Heart right ventricle (tissue), 16 donors: ENCODE measurements at regions of chr2 and their contacts with region 1.

Region 1: DNA sequence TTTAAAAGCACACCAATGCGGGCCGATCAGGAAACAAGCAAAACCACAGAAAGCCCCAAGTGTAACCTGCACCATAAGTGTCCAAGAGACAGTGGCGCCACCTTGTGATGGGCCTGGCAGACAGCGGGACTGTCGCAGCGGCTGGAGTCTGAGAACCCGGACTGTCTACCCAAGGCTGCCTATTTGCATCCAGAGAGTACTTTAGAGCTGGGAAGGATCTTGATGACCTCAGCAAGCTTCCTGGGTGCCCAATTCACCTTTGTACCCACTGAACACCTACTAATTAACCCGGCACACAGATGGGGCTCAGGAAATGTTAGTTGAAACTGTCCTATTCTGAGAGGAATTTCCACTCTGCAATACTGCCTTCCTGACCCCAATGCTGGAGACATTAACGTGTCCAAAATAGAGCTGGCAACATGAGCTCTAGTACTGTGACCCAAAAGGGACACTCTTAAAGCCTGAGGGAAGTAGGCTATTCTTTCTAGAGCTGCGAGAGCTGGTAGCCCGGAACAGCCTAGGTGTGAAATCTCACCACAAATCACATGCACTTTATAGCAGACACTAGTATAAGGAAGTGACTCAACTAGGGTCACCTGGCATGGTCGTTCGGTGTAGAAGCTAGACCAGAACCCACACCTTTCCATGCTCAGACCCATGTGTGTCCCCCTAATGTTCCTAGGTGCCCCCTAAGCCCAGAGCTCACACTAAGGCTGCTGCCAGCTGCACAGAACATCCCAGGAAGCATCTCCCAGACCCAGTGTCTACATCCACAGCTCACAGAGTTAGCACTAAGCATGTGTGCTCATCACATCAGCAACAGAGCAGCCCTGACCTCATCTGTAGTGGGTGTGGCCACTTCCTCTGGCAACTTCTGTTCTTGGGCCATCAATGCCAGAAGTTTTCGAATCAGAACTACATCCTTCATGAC is 25.4 kb downstream of the POLR1A start:
- DNase-seq: peak; percentile 84 to 86
- ATAC-seq: peak; percentile 77 to 94 (median 88)
- H3K4me3 ChIP-seq: no peak overlapping the region
- H3K27ac ChIP-seq: peak overlapping the region in 1 of 10 donors; percentile 58
- H3K4me1 ChIP-seq: peaks cover 0 to 22% (median 12%) of the 10 kb centered on the region in 9 donors
- H3K27me3 ChIP-seq: no peaks in the 10 kb centered on the region
- CTCF ChIP-seq: peak; percentile 58 to 93 (median 86)

Region 2: DNA sequence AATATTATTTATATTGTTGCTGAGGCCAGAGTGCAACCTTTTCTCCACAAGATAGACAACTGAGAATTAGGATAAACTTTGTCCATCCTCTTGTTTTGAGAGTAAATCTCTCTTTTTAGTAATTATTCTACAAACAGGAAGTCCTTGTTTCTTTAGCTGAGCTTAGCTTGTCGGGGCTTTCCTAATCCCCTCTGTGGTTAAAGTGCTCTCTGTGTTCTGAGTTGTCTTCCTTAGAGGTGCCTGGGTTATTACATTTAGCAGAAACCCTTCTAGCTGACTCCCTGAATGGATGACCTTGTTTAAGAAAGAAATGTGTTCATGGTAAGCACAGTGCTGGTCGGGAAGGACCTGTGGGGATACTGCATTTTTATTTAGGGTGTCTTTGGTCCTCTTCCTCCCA is 451.6 kb before region 1 on chr2:
- intact Hi-C with region 1: loop called in 2 of 10 experiments (anchors 10 kb)
- DNase-seq: no peak
- ATAC-seq: no peak
- H3K4me3 ChIP-seq: no peak overlapping the region
- H3K27ac ChIP-seq: no peak overlapping the region
- H3K4me1 ChIP-seq: peaks cover 0 to 15% (median 1%) of the 10 kb centered on the region in 9 donors
- H3K27me3 ChIP-seq: no peaks in the 10 kb centered on the region
- CTCF ChIP-seq: no peak

Region 3: GRCh38 chr2:85712849-85713602 is 367.2 kb before region 1 on chr2:
- intact Hi-C with region 1: loop called in 1 of 10 experiments (anchors 10 kb)
- DNase-seq: peak; percentile 58 to 64
- ATAC-seq: peak in 6 of 8 donors; percentile 5 to 80 (median 60)
- H3K4me3 ChIP-seq: no peak overlapping the region
- H3K27ac ChIP-seq: peak overlapping the region; percentile 67 to 96 (median 86)
- H3K4me1 ChIP-seq: peaks cover 9 to 80% (median 59%) of the 10 kb centered on the region in 9 donors
- H3K27me3 ChIP-seq: no peaks in the 10 kb centered on the region
- CTCF ChIP-seq: no peak

Region 4: GRCh38 chr2:85741833-85742455 is 338.3 kb before region 1 on chr2:
- intact Hi-C with region 1: loop called in 2 of 10 experiments (anchors 10 kb)
- DNase-seq: peak; percentile 51 to 67
- ATAC-seq: peak; percentile 24 to 75 (median 56)
- H3K4me3 ChIP-seq: no peak overlapping the region
- H3K27ac ChIP-seq: peak overlapping the region; percentile 82 to 98 (median 90)
- H3K4me1 ChIP-seq: peaks cover 46 to 88% (median 64%) of the 10 kb centered on the region in 9 donors
- H3K27me3 ChIP-seq: no peaks in the 10 kb centered on the region
- CTCF ChIP-seq: no peak

Region 5: GRCh38 chr2:85888684-85889626 is 191.3 kb before region 1 on chr2 and contains the start of gene ST3GAL5:
- intact Hi-C with region 1: loop called in 9 of 10 experiments (anchors 1 to 5 kb)
- DNase-seq: peak; percentile 90 to 96
- ATAC-seq: peak; percentile 85 to 92 (median 88)
- H3K4me3 ChIP-seq: peak within 1 kb of the TSS; percentile 57 to 79 (median 70)
- H3K27ac ChIP-seq: peak within 1 kb of the TSS; percentile 37 to 92 (median 74)
- H3K4me1 ChIP-seq: peaks cover 3 to 65% (median 36%) of the 10 kb centered on the region in 9 donors
- H3K27me3 ChIP-seq: peaks cover 0 to 5% (median 0%) of the 10 kb centered on the region in 7 donors
- CTCF ChIP-seq: peak; percentile 11 to 81 (median 72)
- total RNA-seq, gene ST3GAL5: 2.0 to 11.8 (median 3.8) TPM

Region 6: DNA sequence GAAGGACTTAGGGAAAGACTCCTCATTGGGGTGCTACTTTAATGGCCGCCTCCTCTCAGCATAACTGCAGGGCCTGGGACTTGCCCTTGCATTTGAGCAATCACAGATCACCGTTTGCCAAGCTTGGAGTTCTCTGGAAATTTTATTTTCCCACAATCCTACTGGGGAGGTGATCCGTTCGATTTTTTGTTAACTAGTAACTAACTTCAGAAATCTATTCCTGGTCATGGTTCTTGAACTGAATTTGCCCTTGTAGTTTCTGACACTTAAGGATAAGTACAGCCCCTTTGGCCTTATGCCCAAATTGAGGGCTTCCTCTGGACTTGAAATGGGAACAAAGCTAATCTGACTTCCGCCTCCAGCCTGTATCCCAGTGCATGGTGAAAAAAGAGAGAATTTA is 131.0 kb before region 1 on chr2:
- intact Hi-C with region 1: no loop called
- DNase-seq: peak in 1 of 2 donors; percentile 79
- ATAC-seq: peak in 7 of 8 donors; percentile 49 to 84 (median 67)
- H3K4me3 ChIP-seq: no peak overlapping the region
- H3K27ac ChIP-seq: no peak overlapping the region
- H3K4me1 ChIP-seq: peaks cover 0 to 15% (median 9%) of the 10 kb centered on the region in 9 donors
- H3K27me3 ChIP-seq: peaks cover 0 to 6% (median 0%) of the 10 kb centered on the region in 7 donors
- CTCF ChIP-seq: no peak

Region 7: GRCh38 chr2:86035883-86036668 is 44.2 kb before region 1 on chr2:
- intact Hi-C with region 1: loop called in 1 of 10 experiments (anchors 5 kb)
- DNase-seq: peak; percentile 75 to 86
- ATAC-seq: peak; percentile 72 to 90 (median 82)
- H3K4me3 ChIP-seq: peak overlapping the region in 2 of 10 donors; percentile 2 to 9
- H3K27ac ChIP-seq: peak overlapping the region; percentile 71 to 93 (median 84)
- H3K4me1 ChIP-seq: peaks cover 18 to 61% (median 52%) of the 10 kb centered on the region in 9 donors
- H3K27me3 ChIP-seq: no peaks in the 10 kb centered on the region
- CTCF ChIP-seq: peak in 4 of 9 donors; percentile 6 to 18 (median 9)